ENCODE measurements at regions of chr15 and their contacts with region 1.

Region 1: DNA sequence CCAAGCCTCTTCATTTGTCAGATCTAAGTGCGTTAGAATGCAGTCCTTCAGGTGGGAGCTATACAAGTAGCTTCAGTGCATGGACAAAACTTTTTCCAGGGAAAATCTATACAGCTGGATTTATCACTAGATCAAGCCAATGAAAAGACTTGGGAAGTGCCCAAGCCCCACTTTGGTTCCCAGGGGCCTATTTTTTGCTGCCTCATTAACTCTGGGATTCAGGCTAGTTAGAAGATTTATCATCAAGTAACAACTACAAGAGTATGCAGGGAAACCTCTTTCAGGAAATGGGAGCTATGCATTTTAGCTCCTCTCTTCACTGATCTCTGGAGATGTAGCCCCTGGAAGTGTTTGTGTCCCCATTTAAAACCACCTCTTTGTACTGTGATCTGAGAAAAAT is 908.8 kb downstream of the SQOR start:
- DNase-seq: no peak
- ATAC-seq: no peak
- H3K4me3 ChIP-seq: no peak overlapping the region
- H3K27ac ChIP-seq: no peak overlapping the region
- H3K4me1 ChIP-seq: no peaks in the 10 kb centered on the region
- H3K27me3 ChIP-seq: no peaks in the 10 kb centered on the region
- CTCF ChIP-seq: no peak
- POLR2A ChIP-seq: no peak

Region 2: DNA sequence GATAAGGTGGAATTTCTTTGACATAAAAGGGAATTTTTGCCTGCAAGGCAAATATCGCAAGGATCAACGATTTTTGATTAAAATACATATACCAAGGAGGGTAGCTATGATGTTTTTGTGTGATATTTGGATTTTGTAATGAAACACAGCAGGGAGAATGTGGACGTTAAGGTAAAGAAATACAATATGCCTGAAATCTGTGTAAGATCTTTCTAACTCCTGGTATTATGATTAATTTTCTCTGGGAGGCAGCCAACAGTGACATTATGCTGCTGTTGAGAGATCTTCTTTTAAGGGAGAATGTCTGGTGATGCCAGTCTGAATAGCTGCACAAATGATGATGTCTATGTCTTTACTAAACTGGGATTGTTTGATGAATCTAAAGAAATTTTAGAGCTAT is 63.5 kb after region 1 on chr15:
- intact Hi-C with region 1: loop called in 1 of 10 experiments (anchors 10 kb)
- DNase-seq: no peak
- ATAC-seq: no peak
- H3K4me3 ChIP-seq: no peak overlapping the region
- H3K27ac ChIP-seq: no peak overlapping the region
- H3K4me1 ChIP-seq: no peaks in the 10 kb centered on the region
- H3K27me3 ChIP-seq: no peaks in the 10 kb centered on the region
- CTCF ChIP-seq: no peak
- POLR2A ChIP-seq: no peak